ENCODE measurements at regions of chr3 and their contacts with region 1.

Region 1: GRCh38 chr3:13025778-13026518 is 47.3 kb downstream of the IQSEC1 start:
- DNase-seq: no peak
- ATAC-seq: no peak
- H3K4me3 ChIP-seq: no peak overlapping the region
- H3K4me3 Mint-ChIP-seq: no peak overlapping the region
- H3K27ac ChIP-seq: no peak overlapping the region
- H3K27ac Mint-ChIP-seq: no peak overlapping the region
- H3K4me1 ChIP-seq: no peaks in the 10 kb centered on the region
- H3K4me1 Mint-ChIP-seq: peaks cover 0 to 15% (median 4%) of the 10 kb centered on the region in 3 donors
- H3K27me3 ChIP-seq: peaks cover 0 to 5% of the 10 kb centered on the region in 2 experiments
- H3K27me3 Mint-ChIP-seq: no peaks in the 10 kb centered on the region

Region 2: DNA sequence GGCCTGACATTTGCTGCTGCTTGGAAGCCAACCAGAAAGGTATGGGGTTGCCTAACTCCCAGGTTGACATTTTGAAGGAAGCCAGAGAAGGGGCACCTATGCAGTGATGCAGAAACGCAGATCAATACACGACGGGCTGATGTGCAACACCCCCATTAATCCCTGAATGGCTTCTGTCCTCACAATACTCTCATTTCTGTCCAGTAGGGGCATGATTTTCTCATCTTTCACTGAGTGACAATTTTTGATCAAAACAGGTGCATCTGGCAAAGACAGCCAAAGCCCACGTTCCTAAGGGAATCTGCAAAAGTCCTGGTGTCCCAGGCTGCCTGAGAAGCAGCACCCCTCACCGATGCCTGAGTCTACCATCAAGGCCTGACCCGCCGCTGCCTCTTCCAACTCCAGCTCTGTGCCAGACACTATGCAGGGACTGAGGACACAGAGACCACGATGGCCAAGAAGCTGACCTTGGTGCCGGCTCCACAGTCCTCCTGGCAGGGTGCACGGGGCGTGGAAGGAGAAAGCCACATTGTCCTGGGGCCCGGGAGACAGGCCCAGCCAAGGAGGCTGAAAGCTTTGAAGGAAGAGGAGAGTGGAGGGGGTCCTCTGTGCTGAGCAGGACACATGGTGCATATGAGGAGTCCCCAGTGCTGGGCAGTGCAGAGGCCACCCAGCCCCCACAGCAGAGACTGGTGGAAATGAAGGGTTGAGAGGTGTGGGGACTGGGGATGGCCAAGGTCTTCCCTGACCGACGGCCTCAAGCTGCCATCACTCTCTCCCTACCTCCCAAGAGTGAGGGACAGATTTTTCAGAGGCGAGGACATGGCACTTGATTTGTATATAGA is 234.5 kb after region 1 on chr3:
- CTCF ChIA-PET with region 1: interaction called in 1 of 2 experiments, 11 read pairs
- POLR2A ChIA-PET with region 1: no interaction called
- DNase-seq: no peak
- ATAC-seq: no peak
- H3K4me3 ChIP-seq: no peak overlapping the region
- H3K4me3 Mint-ChIP-seq: no peak overlapping the region
- H3K27ac ChIP-seq: no peak overlapping the region
- H3K27ac Mint-ChIP-seq: no peak overlapping the region
- H3K4me1 ChIP-seq: peaks cover 3 to 10% of the 10 kb centered on the region in 2 experiments
- H3K4me1 Mint-ChIP-seq: peaks cover 7 to 16% (median 9%) of the 10 kb centered on the region in 3 donors
- H3K27me3 ChIP-seq: peaks cover 0 to 31% of the 10 kb centered on the region in 2 experiments
- H3K27me3 Mint-ChIP-seq: peaks cover 0 to 7% of the 10 kb centered on the region in 2 donors

Region 3: GRCh38 chr3:14363991-14364390 is 1338.0 kb after region 1 on chr3:
- CTCF ChIA-PET with region 1: no interaction called
- POLR2A ChIA-PET with region 1: interaction called in 1 of 2 experiments, 11 read pairs
- DNase-seq: no peak
- ATAC-seq: no peak
- H3K4me3 ChIP-seq: no peak overlapping the region
- H3K4me3 Mint-ChIP-seq: no peak overlapping the region
- H3K27ac ChIP-seq: no peak overlapping the region
- H3K27ac Mint-ChIP-seq: no peak overlapping the region
- H3K4me1 ChIP-seq: no peaks in the 10 kb centered on the region
- H3K4me1 Mint-ChIP-seq: no peaks in the 10 kb centered on the region
- H3K27me3 ChIP-seq: peaks cover 0 to 9% of the 10 kb centered on the region in 2 experiments
- H3K27me3 Mint-ChIP-seq: peaks cover 0 to 2% of the 10 kb centered on the region in 2 donors

Measured in T-cell (primary cell).